ENCODE measurements at regions of chr7 and their contacts with region 1.

Region 1: GRCh38 chr7:158976849-158977593 is 120.7 kb downstream of the DYNC2I1 start:
- DNase-seq: peak; percentile 76
- ATAC-seq: peak; percentile 72
- H3K4me3 ChIP-seq: peak overlapping the region; percentile 57 to 73 (median 67)
- H3K27ac ChIP-seq: no peak overlapping the region
- H3K4me1 ChIP-seq: peaks cover 24% of the 10 kb centered on the region
- H3K27me3 ChIP-seq: peaks cover 0 to 5% of the 10 kb centered on the region in 2 experiments; a peak in 1 of 5 replicates
- CTCF ChIP-seq: peak; percentile 89
- EP300 ChIP-seq: no peak
- POLR2A ChIP-seq: no peak
- RAD21 ChIP-seq: peak; percentile 66

Region 2: GRCh38 chr7:158695726-158696452 is 281.1 kb before region 1 on chr7:
- CTCF ChIA-PET with region 1: interaction called, 10 read pairs
- POLR2A ChIA-PET with region 1: no interaction called
- in situ Hi-C with region 1: loop called (anchors 5 kb)
- intact Hi-C with region 1: loop called (anchors 1 kb)
- DNase-seq: peak; percentile 35
- ATAC-seq: peak; percentile 78
- H3K4me3 ChIP-seq: no peak overlapping the region
- H3K27ac ChIP-seq: no peak overlapping the region
- H3K4me1 ChIP-seq: peaks cover 2% of the 10 kb centered on the region; the same call in 1 of the 2 replicates
- H3K27me3 ChIP-seq: no peaks in the 10 kb centered on the region
- CTCF ChIP-seq: peak; percentile 60
- EP300 ChIP-seq: no peak
- POLR2A ChIP-seq: no peak
- RAD21 ChIP-seq: 0 out of 2 replicates have a peak, but pooled peaks have one; percentile 36

Region 3: DNA sequence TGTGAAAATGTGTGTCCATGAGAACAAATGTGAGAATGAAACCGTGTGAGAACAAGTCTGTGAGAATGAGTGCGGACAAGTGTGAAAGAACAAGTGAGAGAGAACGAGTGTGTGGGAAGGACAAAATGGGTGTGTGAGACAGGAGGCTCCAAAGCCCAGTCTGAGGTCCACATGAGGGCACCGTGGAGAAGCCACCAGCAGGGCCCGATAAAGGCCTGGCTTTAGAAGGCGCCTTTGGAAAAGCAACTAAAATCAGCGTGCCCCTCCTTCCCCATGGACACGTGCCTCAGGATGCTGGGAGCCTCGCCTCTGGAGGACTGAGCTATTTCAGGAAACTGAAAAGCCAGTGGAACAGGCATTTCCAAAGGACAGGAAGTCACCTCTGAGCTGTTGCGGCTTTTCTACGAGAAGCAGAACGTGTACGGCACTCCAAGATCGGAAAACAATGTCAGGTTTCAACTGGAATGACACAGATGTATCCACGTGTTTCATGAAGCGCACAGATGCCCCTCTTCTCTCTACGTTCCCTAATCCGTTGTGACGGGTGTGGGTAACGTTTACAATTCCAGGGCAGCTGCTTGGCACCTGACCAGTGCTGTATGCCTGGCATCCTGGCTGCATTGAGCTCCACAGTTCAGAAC is 194.1 kb before region 1 on chr7:
- CTCF ChIA-PET with region 1: no interaction called
- POLR2A ChIA-PET with region 1: no interaction called
- in situ Hi-C with region 1: no loop called
- intact Hi-C with region 1: loop called (anchors 5 kb)
- DNase-seq: peak; percentile 15
- ATAC-seq: peak; percentile 74
- H3K4me3 ChIP-seq: no peak overlapping the region
- H3K27ac ChIP-seq: no peak overlapping the region
- H3K4me1 ChIP-seq: no peaks in the 10 kb centered on the region
- H3K27me3 ChIP-seq: no peaks in the 10 kb centered on the region
- CTCF ChIP-seq: peak; percentile 53
- EP300 ChIP-seq: no peak
- POLR2A ChIP-seq: no peak
- RAD21 ChIP-seq: no peak; the same call in 1 of the 2 replicates

Region 4: DNA sequence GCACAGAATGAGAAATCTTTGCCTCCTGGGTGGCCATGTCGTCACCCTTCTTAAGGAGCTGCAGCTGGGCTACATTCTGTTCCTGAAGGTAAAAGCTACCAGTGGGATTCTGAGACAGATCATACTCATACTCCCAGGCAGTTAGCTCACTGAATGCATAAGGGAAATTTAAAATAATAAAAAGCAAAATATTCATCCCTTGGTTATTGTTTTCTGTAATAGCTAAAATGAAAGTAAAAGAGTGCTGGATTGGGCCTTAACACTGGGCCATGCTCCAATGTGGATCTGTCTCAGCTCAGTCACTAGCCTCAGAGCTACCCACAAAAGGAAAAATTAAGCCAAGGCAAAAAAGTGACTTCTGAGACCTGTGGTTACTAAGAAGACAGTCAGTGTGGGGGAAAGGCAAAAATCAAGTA is 129.6 kb before region 1 on chr7:
- CTCF ChIA-PET with region 1: no interaction called
- POLR2A ChIA-PET with region 1: interaction called, 15 read pairs
- in situ Hi-C with region 1: no loop called
- intact Hi-C with region 1: no loop called
- DNase-seq: no peak
- ATAC-seq: no peak
- H3K4me3 ChIP-seq: no peak overlapping the region
- H3K27ac ChIP-seq: no peak overlapping the region
- H3K4me1 ChIP-seq: peaks cover 39% of the 10 kb centered on the region
- H3K27me3 ChIP-seq: no peaks in the 10 kb centered on the region; a peak in 1 of 5 replicates
- CTCF ChIP-seq: no peak
- EP300 ChIP-seq: no peak
- POLR2A ChIP-seq: no peak
- RAD21 ChIP-seq: no peak

Region 5: DNA sequence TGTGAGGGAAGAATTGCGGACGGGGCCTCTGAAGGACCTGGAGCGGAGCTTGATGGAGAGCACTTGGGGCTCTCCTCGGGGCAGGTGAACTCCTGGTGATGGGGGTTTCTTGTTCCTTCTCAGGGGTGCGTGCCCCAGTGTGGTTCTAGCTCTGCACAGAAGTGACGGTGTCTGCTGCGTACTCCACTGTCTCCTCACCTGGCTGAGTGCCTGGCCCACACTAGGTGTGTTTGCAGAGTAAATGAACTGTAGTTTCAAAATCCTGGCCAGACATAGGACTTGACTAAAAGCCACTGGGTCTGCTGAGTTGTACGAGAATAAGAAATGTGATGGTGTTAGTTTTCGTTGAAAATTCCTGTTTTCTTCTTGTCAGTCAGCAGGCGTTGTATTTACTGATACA is 85.1 kb before region 1 on chr7:
- CTCF ChIA-PET with region 1: interaction called, 22 read pairs
- POLR2A ChIA-PET with region 1: no interaction called
- in situ Hi-C with region 1: loop called (anchors 5 kb)
- intact Hi-C with region 1: no loop called
- DNase-seq: no peak
- ATAC-seq: no peak
- H3K4me3 ChIP-seq: no peak overlapping the region
- H3K27ac ChIP-seq: no peak overlapping the region
- H3K4me1 ChIP-seq: no peaks in the 10 kb centered on the region
- H3K27me3 ChIP-seq: no peaks in the 10 kb centered on the region
- CTCF ChIP-seq: no peak
- EP300 ChIP-seq: no peak
- POLR2A ChIP-seq: no peak
- RAD21 ChIP-seq: no peak

Region 6: DNA sequence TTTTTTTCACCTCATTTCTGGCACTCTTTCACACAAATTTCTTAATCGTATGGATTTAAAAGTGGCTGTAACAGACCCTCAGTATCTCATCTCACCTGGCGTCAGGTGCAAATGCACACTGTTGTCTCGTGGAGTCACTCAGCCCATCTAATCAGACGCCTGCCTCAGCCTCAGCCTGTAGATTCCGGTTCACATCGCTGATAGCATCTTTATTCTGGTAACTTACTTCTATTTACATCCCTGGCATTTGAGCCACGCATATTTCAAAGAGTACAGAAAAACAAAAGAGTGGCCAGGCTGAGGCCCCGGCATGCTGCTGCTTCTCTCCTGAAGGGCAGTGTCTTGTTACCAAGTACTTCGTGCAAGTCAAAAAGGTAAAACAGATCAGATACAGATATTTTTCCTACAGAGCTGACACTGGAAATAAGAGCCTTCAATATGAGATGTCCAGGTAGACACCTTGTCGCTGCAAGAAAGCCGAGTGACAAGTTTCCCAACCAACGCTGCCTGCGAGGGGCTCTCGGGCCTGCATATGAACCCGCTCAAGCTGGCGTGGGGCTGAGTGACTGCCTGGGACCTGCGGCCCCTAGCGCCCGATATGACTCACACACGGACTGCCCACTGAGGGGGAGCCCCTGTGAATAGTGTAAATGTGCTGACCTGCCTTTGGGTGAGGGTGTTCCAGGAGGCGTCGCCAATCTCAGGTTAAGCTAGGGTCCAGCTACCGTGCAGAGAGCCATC is 163.3 kb after region 1 on chr7:
- CTCF ChIA-PET with region 1: no interaction called
- POLR2A ChIA-PET with region 1: no interaction called
- in situ Hi-C with region 1: no loop called
- intact Hi-C with region 1: no loop called
- DNase-seq: no peak
- ATAC-seq: peak; percentile 78
- H3K4me3 ChIP-seq: no peak overlapping the region
- H3K27ac ChIP-seq: no peak overlapping the region
- H3K4me1 ChIP-seq: no peaks in the 10 kb centered on the region
- H3K27me3 ChIP-seq: peaks cover 4 to 77% of the 10 kb centered on the region in 2 experiments; a peak in 4 of 5 replicates
- CTCF ChIP-seq: peak; percentile 13; the same call in 1 of the 2 replicates
- EP300 ChIP-seq: no peak
- POLR2A ChIP-seq: no peak
- RAD21 ChIP-seq: no peak

Measured in HepG2 (cell line).